Posterior cingulate gyrus (tissue), 11 donors: ENCODE measurements at regions of chr6 and their contacts with region 1.

Region 1: DNA sequence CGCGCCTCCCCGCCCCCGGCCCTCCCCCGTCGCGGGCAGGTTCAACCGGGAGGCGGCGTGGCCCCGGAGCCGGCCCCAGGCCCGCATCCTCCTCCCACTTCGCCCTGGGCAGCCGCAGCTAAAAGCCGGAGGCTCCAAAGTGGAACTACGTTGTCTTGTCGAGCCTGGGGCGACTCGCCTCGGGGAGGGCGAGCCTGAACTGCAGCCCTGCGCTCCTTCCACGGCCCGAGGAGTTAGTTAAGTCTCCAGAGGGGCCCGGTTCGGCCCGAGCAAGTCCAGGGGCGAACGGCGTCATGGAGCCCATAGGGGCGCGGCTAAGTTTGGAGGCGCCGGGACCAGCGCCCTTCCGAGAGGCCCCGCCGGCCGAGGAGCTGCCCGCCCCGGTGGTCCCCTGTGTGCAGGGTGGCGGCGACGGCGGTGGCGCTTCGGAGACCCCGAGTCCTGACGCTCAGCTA is at the start of gene PPP1R3G:
- DNase-seq: peak in 2 of 10 donors; percentile 12 to 79

Region 2: DNA sequence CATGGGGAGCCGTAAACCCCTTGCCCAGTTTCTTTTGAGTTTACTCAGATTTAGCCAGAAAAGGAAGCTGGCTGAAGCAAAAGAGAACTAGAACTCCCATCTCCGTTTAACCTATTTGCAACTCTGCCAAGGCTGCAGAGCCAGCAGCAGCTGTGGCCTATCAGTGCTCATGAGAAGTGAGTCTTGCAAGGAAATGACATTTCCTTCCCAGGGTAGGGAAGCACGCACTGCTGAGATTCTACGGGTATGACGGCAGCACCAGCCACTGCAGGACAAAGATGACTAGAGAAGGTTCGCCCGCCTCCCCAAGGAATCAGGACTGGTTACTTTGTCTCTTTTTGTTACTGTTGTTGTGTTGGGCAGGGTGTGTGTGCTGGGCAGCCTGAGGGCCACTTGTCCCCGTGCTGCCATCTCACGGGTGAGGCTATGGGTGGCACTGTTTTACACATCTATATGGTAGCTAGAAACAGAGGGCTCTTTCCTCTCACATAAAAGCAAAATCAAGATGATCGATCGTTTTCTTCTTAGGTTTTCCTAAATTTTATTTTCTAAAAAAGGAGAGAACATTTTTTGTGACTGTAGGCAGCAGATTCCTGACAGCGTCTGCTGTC is 47.6 kb after region 1 on chr6:
- intact Hi-C with region 1: loop called (anchors 5 kb)
- DNase-seq: peak in 7 of 10 donors; percentile 28 to 91 (median 48)